ENCODE measurements at regions of chrX and their contacts with region 1.

Region 1: DNA sequence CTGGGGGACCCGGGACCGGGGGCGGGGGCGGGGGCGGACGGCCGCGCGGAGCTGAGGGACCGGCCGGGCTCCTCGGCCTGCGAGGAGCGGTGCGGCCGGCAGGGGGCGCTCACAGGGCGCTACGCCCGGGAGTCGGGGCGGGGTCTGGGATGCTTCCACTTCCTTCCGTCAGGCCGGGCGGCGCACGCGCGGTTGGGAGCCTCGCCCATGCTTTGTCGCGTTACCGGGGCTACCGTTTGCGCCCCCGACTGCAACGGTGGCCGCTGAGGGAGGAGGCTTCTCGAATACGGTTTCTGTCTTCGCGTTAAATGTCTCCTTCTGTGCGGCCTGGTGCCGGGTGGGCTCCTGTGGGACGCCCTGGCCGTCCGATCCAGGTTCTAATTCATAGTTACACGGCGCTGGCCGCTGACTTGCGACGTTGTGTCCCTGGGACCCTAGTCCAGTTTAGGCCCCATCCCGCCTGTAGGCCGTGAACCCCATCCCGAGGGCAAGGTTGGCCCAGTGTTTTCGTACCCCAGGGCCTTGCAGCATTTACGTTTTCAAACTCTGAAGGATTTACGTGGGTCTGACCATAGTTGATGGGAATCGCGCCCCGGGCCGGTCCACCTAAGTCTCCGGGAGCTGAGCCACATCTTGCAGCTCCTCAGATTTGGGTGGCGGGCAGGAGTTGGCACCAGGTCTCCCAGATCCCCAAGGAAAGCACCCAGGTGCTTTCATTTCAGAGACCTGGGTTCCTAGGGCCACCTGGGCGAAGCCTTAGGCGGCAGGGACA is 549 bp downstream of the MSL3 start:
- DNase-seq: peak; percentile 80 to 94 (median 88)
- ATAC-seq: peak; percentile 62
- H3K4me3 ChIP-seq: peak overlapping the region; percentile 95
- H3K4me3 Mint-ChIP-seq: peak overlapping the region; percentile 88
- H3K27ac ChIP-seq: peak overlapping the region; percentile 91 to 93
- H3K27ac Mint-ChIP-seq: peak overlapping the region; percentile 94
- H3K4me1 ChIP-seq: peaks cover 24% of the 10 kb centered on the region
- H3K4me1 Mint-ChIP-seq: peaks cover 33% of the 10 kb centered on the region
- H3K27me3 ChIP-seq: no peaks in the 10 kb centered on the region
- H3K27me3 Mint-ChIP-seq: no peaks in the 10 kb centered on the region
- CTCF ChIP-seq: no peak

Region 2: GRCh38 chrX:10014462-10015356 is 1743.9 kb before region 1 on chrX:
- CTCF ChIA-PET with region 1: no interaction called
- POLR2A ChIA-PET with region 1: no interaction called
- intact Hi-C with region 1: loop called in 1 of 2 experiments (anchors 10 kb)
- DNase-seq: peak; percentile 55 to 90 (median 68)
- ATAC-seq: peak; percentile 90
- H3K4me3 ChIP-seq: peak overlapping the region; percentile 64
- H3K4me3 Mint-ChIP-seq: peak overlapping the region; percentile 58
- H3K27ac ChIP-seq: peak overlapping the region in 1 of 2 donors; percentile 13
- H3K27ac Mint-ChIP-seq: no peak overlapping the region
- H3K4me1 ChIP-seq: peaks cover 39% of the 10 kb centered on the region
- H3K4me1 Mint-ChIP-seq: peaks cover 33% of the 10 kb centered on the region
- H3K27me3 ChIP-seq: no peaks in the 10 kb centered on the region
- H3K27me3 Mint-ChIP-seq: no peaks in the 10 kb centered on the region
- CTCF ChIP-seq: no peak

Region 3: DNA sequence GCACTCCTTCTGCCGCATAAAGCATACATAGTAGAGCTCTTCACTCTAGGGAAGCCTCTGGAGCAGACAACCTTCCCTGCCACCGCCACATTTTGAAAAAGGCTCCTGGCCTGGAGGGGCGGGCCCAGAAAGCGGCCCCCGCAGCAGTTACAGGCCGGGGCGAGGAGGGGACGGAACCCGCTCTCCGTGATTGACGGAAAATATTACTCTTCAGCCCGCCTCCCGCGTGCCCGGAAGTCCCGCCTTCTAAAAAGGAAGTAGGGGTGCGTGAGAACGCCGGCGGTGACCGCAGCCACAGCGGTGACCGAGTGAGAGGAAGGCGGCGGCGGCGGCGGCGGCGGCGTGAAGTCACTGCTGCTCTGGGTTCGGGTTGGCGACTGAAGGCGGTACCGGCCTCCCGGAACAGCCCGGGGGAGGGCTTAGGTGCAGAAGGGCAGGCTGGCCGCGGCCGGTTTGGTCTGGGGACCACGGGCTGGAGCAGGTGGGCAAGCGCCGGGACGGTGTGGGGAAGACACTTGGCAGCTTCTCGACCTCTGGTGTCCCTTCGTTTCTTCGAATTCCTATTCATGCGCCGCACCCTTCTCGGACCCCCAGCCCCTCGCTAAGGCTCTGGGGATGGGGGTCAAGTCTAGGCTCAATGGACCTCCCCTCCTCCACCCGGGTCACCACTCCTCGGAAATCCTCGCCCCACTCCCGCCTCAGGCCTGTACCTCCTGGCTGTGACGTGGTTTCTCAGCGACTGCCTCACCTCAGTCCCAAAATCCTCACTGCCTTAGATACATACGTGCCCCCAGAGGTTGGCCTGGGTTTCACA is 647.3 kb before region 1 on chrX and contains the start of gene HCCS:
- CTCF ChIA-PET with region 1: no interaction called
- POLR2A ChIA-PET with region 1: no interaction called
- intact Hi-C with region 1: loop called in 1 of 2 experiments (anchors 10 kb)
- DNase-seq: peak; percentile 65 to 92 (median 77)
- ATAC-seq: peak; percentile 85
- H3K4me3 ChIP-seq: peak within 1 kb of the TSS; percentile 80
- H3K4me3 Mint-ChIP-seq: peak within 1 kb of the TSS; percentile 98
- H3K27ac ChIP-seq: peak within 1 kb of the TSS; percentile 87 to 94
- H3K27ac Mint-ChIP-seq: no peak within 1 kb of the TSS
- H3K4me1 ChIP-seq: peaks cover 19% of the 10 kb centered on the region
- H3K4me1 Mint-ChIP-seq: peaks cover 12% of the 10 kb centered on the region
- H3K27me3 ChIP-seq: no peaks in the 10 kb centered on the region
- H3K27me3 Mint-ChIP-seq: no peaks in the 10 kb centered on the region
- CTCF ChIP-seq: no peak
- total RNA-seq, gene HCCS: 7.3 to 7.7 TPM

Region 4: DNA sequence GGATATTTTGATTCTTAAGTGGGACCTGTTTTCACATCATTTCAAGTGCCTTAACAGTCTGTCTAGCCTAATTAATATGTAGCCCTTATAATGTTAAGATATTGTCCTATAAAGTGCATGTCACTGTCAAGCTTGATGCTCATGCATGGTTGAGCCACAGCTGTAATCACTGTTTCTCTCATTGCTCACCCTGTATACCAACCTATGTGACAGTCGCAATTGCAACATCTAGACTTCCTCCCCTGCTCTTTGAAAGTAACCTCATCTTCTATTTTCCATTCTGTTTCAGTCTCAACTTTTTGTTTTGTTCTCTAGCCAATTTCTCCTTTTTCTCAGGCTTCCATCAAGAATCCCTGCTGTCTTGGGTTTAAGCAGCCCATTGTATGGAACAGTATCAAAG is 25.0 kb before region 1 on chrX:
- CTCF ChIA-PET with region 1: no interaction called
- POLR2A ChIA-PET with region 1: no interaction called
- intact Hi-C with region 1: no loop called
- DNase-seq: no peak
- ATAC-seq: no peak
- H3K4me3 ChIP-seq: no peak overlapping the region
- H3K4me3 Mint-ChIP-seq: no peak overlapping the region
- H3K27ac ChIP-seq: no peak overlapping the region
- H3K27ac Mint-ChIP-seq: no peak overlapping the region
- H3K4me1 ChIP-seq: no peaks in the 10 kb centered on the region
- H3K4me1 Mint-ChIP-seq: no peaks in the 10 kb centered on the region
- H3K27me3 ChIP-seq: no peaks in the 10 kb centered on the region
- H3K27me3 Mint-ChIP-seq: peaks cover 10% of the 10 kb centered on the region
- CTCF ChIP-seq: no peak

Region 5: DNA sequence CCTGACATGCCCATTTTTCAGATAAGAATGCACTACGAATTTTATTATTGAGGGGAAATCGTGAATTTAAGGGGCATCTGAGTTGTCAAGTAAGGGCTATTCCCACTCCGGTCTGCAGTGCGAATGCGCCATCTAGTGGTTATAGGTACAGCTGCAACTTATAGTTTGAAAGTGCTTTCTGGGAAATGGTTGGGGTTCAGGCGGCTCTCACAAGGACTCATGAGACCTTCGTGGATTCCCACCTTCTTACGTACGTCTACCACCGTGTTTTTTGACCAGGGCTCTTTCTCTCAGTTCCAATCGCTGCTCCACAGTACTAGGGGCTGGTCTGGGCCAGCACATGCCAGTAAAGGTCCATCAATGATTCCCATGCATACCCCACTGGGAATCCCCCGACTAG is 11.7 kb after region 1 on chrX:
- CTCF ChIA-PET with region 1: interaction called, 9 read pairs
- POLR2A ChIA-PET with region 1: interaction called, 17 read pairs
- intact Hi-C with region 1: loop called (anchors 1 to 2 kb)
- DNase-seq: peak in 11 of 14 experiments; percentile 27 to 83 (median 46)
- ATAC-seq: peak; percentile 60
- H3K4me3 ChIP-seq: no peak overlapping the region
- H3K4me3 Mint-ChIP-seq: no peak overlapping the region
- H3K27ac ChIP-seq: peak overlapping the region in 1 of 2 donors; percentile 16
- H3K27ac Mint-ChIP-seq: peak overlapping the region; percentile 79
- H3K4me1 ChIP-seq: peaks cover 26% of the 10 kb centered on the region
- H3K4me1 Mint-ChIP-seq: peaks cover 40% of the 10 kb centered on the region
- H3K27me3 ChIP-seq: no peaks in the 10 kb centered on the region
- H3K27me3 Mint-ChIP-seq: no peaks in the 10 kb centered on the region
- CTCF ChIP-seq: peak; percentile 70